PC-3 (cell line): ENCODE measurements at regions of chr20 and their contacts with region 1.

Region 1: GRCh38 chr20:11267131-11267761 is 593.4 kb upstream of the JAG1 start:
- DNase-seq: peak; percentile 96
- ATAC-seq: peak; percentile 90
- H3K4me3 ChIP-seq: peak overlapping the region; percentile 50; the same call in 1 of the 2 replicates
- H3K27ac ChIP-seq: peak overlapping the region; percentile 93
- H3K4me1 ChIP-seq: peaks cover 27% of the 10 kb centered on the region
- H3K27me3 ChIP-seq: no peaks in the 10 kb centered on the region
- CTCF ChIP-seq: no peak

Region 2: DNA sequence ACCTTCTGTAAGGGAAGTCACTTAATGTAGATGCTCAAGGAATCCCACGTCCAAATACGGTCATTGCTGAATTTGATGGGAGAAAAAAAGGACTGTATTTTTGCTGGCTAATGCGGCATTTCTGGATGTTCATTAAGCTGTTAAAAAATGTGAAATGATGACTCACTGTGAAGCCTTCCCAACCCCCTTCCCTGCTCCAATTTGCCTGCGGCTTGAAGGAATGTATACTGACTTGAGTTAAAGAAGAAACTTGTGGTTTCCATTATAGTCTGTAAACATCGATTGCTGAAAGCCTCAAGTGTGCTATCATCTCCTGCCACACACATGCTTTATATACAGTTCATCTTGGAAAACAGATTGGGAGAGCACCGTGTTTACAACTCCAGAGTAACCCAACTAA is 344.3 kb before region 1 on chr20:
- CTCF ChIA-PET with region 1: no interaction called
- POLR2A ChIA-PET with region 1: no interaction called
- intact Hi-C with region 1: loop called (anchors 2 kb)
- DNase-seq: peak; percentile 97
- ATAC-seq: peak; percentile 79
- H3K4me3 ChIP-seq: peak overlapping the region; percentile 23; the same call in 1 of the 2 replicates
- H3K27ac ChIP-seq: peak overlapping the region; percentile 69
- H3K4me1 ChIP-seq: peaks cover 64% of the 10 kb centered on the region
- H3K27me3 ChIP-seq: no peaks in the 10 kb centered on the region
- CTCF ChIP-seq: no peak

Region 3: GRCh38 chr20:11140359-11140758 is 126.9 kb before region 1 on chr20:
- CTCF ChIA-PET with region 1: interaction called, 4 read pairs
- POLR2A ChIA-PET with region 1: no interaction called
- intact Hi-C with region 1: loop called (anchors 1 kb)
- DNase-seq: peak; percentile 96
- ATAC-seq: peak; percentile 97
- H3K4me3 ChIP-seq: no peak overlapping the region
- H3K27ac ChIP-seq: peak overlapping the region; percentile 66
- H3K4me1 ChIP-seq: peaks cover 17% of the 10 kb centered on the region
- H3K27me3 ChIP-seq: no peaks in the 10 kb centered on the region
- CTCF ChIP-seq: peak; percentile 48; the same call in 1 of the 2 replicates

Region 4: DNA sequence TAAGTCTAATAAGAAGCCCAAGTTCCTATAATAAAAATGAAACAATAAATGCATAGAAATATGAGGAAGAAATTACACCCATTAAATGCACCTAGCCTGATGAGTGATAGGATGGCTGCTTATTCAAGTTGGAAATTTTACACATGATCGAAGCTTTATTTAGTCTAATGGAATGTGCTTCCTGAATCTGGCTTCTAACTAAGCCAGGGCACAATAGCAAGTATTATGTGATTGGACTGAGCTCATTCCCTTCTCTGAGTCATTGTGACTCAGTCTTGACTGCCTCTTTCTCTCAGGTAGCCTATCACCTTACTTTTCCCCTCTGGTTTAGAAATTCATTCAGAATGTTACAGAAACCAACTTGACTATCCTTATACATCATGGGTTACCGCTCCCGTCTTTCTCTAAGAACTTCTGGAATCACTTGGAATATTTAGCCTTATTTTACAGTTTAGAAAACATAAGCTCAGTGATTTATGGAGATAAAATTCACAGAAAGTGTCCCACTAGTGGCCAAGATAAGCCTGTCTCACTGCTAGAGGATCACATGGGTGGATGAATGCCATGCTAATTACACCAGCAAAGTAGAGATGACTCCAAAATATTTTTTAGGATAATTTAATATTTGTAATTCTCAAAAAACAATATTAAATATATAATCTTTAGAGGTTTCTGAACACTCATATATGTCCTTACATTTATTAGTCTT is 88.1 kb before region 1 on chr20:
- CTCF ChIA-PET with region 1: interaction called, 10 read pairs
- POLR2A ChIA-PET with region 1: no interaction called
- intact Hi-C with region 1: no loop called
- DNase-seq: peak; percentile 98
- ATAC-seq: peak; percentile 94
- H3K4me3 ChIP-seq: no peak overlapping the region
- H3K27ac ChIP-seq: peak overlapping the region; percentile 85
- H3K4me1 ChIP-seq: peaks cover 36% of the 10 kb centered on the region
- H3K27me3 ChIP-seq: no peaks in the 10 kb centered on the region
- CTCF ChIP-seq: peak; percentile 40

Region 5: GRCh38 chr20:11216451-11217314 is 50.6 kb before region 1 on chr20:
- CTCF ChIA-PET with region 1: no interaction called
- POLR2A ChIA-PET with region 1: interaction called, 14 read pairs
- intact Hi-C with region 1: no loop called
- DNase-seq: no peak
- ATAC-seq: no peak
- H3K4me3 ChIP-seq: no peak overlapping the region
- H3K27ac ChIP-seq: no peak overlapping the region
- H3K4me1 ChIP-seq: no peaks in the 10 kb centered on the region
- H3K27me3 ChIP-seq: no peaks in the 10 kb centered on the region
- CTCF ChIP-seq: no peak

Region 6: DNA sequence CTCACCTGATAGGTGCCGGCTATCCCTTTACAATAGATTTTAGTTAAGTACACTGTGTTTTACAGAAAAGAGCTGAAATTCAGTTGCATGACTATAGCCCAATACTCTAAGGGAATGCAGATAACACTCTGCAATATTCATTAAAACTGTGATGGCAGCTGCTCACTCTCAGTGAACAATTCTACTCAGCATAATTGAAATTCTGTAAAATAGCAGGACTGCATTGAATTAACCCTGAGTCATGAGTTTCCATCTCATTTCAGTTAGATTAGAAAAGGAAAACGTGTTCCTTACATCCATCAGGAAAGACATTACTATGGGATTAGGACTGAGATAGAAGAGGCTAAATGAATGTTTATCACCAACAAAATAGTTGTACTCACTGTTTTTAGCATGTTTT is 19.9 kb after region 1 on chr20:
- CTCF ChIA-PET with region 1: no interaction called
- POLR2A ChIA-PET with region 1: no interaction called
- intact Hi-C with region 1: no loop called
- DNase-seq: no peak
- ATAC-seq: no peak
- H3K4me3 ChIP-seq: no peak overlapping the region
- H3K27ac ChIP-seq: no peak overlapping the region
- H3K4me1 ChIP-seq: no peaks in the 10 kb centered on the region
- H3K27me3 ChIP-seq: no peaks in the 10 kb centered on the region
- CTCF ChIP-seq: no peak